T-cell (primary cell): ENCODE measurements at regions of chr15 and their contacts with region 1.

Region 1: DNA sequence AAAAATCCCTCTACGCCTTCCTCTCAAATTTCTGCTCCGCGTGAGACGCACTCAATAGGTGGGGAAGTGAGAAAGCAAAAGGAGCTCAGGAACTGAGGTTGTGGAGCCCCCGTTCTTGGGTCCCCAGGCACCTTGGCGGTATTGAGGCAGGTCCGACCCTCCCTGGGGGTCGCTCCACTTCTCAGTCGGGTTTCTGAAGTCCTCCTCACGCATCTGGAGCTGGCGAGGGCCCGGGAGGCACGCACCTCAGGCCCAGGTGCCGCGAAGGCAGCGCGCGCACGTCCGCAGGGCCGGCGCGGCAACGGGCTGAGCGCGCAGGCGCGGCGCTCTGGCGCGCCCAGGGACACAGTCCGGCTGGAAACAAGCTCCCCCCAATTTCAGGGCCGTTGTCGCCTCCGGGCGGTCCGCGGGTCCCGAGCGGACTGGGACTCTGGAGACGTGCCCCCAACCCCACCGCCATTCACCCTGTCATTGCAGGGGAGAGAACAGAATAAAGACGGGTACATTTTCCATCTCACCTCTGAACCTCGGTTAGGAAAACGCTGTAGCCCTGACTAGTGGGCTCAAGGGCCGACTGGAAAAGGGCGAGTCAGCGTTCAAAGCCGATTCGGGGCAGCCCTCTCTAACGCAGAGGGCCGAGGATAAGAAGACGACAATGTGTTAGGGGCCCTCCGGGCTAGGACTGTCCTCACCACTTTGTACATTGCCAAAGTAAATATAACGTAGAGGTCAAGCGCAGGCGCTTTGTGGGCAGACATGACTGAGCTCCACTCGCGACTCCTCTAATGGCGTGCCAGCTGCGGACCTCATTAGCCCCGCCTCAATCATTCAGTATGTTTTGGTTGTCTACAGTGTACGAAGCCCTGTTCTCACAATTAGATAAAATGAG is at the start of gene ZNF770:
- DNase-seq: peak; percentile 56 to 91 (median 75)
- ATAC-seq: peak; percentile 85 to 93 (median 86)
- H3K4me3 ChIP-seq: peak within 1 kb of the TSS; percentile 84 to 88
- H3K4me3 Mint-ChIP-seq: peak within 1 kb of the TSS; percentile 93 to 98 (median 97)
- H3K27ac ChIP-seq: peak within 1 kb of the TSS; percentile 94
- H3K27ac Mint-ChIP-seq: peak within 1 kb of the TSS; percentile 99
- H3K4me1 ChIP-seq: peaks cover 15 to 20% of the 10 kb centered on the region in 2 experiments
- H3K4me1 Mint-ChIP-seq: peaks cover 34 to 51% (median 48%) of the 10 kb centered on the region in 3 donors
- H3K27me3 ChIP-seq: peaks cover 0 to 2% of the 10 kb centered on the region in 2 experiments
- H3K27me3 Mint-ChIP-seq: no peaks in the 10 kb centered on the region
- total RNA-seq, gene ZNF770: 38.1 to 48.1 (median 44.5) TPM

Region 2: GRCh38 chr15:34969340-34970097 is 18.7 kb before region 1 on chr15 and contains the start of gene AQR:
- CTCF ChIA-PET with region 1: interaction called, 5 to 65 read pairs
- POLR2A ChIA-PET with region 1: interaction called, 8 to 23 read pairs
- DNase-seq: peak; percentile 80 to 94 (median 88)
- ATAC-seq: peak; percentile 97 to 99 (median 97)
- H3K4me3 ChIP-seq: peak within 1 kb of the TSS; percentile 94 to 97
- H3K4me3 Mint-ChIP-seq: peak within 1 kb of the TSS; percentile 99 to 100 (median 100)
- H3K27ac ChIP-seq: peak within 1 kb of the TSS; percentile 64
- H3K27ac Mint-ChIP-seq: peak within 1 kb of the TSS; percentile 95 to 97
- H3K4me1 ChIP-seq: peaks cover 9 to 27% of the 10 kb centered on the region in 2 experiments
- H3K4me1 Mint-ChIP-seq: peaks cover 44 to 52% (median 49%) of the 10 kb centered on the region in 3 donors
- H3K27me3 ChIP-seq: no peaks in the 10 kb centered on the region
- H3K27me3 Mint-ChIP-seq: no peaks in the 10 kb centered on the region
- total RNA-seq, gene AQR: 35.3 to 48.6 (median 36.3) TPM